BJ (cell line): ENCODE measurements at regions of chr12 and their contacts with region 1.

Region 1: DNA sequence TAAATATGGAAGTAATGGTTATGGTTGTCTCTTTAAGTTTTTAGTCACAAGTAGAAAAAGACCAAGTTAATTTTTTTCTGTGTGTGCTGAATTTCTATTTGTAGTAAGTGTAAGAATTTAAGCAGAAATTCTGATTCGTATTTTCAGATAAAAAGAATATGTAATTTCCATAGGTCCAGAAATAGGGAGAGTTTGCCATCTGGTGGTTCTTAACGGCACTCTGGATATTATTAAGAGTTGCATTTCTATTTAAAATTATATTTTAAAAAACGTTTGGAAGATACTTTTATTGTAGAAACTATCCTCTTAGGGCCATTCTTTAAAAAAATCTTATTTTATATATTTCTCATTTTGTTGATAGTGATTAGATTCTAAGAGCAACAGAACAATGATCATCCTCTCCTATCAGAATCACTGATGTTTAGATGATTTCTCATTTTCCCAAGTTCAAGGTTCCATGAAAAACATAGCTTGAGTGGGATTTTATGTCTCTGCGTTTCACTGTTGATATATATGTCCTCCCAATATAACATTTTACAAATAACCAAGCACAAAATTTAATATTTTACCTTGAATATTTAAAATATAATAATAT is 88.3 kb downstream of the LRRK2 start:
- DNase-seq: no peak
- H3K4me3 ChIP-seq: no peak overlapping the region
- H3K27me3 ChIP-seq: no peaks in the 10 kb centered on the region
- CTCF ChIP-seq: peak; percentile 50; the same call in 1 of the 2 replicates

Region 2: DNA sequence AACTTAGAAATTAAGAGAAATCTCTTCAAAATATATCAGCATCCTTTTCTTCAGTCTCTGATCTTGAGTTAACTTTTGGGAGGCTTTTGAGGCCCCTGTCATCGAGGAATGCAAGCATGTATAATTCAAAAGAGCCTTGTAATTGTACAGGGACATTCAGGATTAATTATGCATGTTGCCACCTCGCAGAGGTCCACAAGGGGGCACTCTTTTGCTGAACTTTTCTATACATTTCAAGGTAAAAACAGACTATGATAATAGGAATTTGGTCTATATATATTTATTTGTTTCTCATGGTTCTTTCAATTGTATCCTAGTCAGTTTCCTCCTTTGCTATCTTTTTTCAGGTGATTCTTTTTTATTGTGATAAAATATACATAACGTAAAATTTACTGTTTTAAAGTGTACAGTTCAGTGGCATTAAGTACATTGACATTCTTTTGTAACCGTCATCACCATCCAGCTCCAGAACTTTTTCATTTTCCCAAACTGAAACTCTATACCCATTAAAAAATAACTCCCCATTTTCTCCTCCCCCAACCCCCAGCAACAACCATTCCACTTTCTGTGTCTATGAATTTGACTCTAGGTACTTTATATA is 160.2 kb before region 1 on chr12:
- CTCF ChIA-PET with region 1: interaction called, 11 read pairs
- POLR2A ChIA-PET with region 1: no interaction called
- DNase-seq: peak; percentile 5
- H3K4me3 ChIP-seq: no peak overlapping the region
- H3K27me3 ChIP-seq: no peaks in the 10 kb centered on the region
- CTCF ChIP-seq: peak; percentile 79

Region 3: DNA sequence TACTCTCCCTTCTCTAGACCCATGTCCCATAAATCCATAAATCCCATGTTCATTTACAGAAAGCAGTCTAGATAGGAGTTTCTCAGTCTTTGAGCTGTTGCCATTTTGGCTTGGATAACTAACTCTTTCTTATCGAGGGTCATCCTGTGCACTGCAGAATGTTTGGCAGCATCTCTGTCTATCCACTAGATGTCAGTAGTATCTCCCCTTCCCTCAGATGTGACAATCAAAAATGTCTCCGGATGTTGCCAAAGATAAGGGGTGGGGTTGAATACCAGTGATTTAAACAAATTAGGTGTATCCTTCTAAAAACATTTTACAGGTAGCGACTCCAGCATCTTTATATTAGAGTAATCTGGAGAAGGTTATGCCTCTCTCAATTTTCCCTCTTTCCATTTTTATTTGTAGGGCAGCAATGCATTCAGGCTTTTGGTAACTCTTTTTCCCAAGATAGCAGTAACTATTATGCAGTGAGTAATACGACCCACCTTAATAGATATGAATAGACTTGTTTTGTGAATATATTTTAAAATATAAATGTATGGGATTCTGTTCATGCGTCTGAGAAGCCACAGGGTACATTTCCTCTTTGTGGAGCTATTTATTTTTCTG is 12.4 kb after region 1 on chr12:
- CTCF ChIA-PET with region 1: interaction called, 12 read pairs
- POLR2A ChIA-PET with region 1: no interaction called
- DNase-seq: no peak
- H3K4me3 ChIP-seq: no peak overlapping the region
- H3K27me3 ChIP-seq: no peaks in the 10 kb centered on the region
- CTCF ChIP-seq: peak; percentile 62